ENCODE measurements at regions of chr3 and their contacts with region 1.

Region 1: GRCh38 chr3:185572183-185572582 is 13.9 kb upstream of the SENP2 start:
- DNase-seq: no peak
- ATAC-seq: no peak
- H3K4me3 ChIP-seq: no peak overlapping the region
- H3K27ac ChIP-seq: no peak overlapping the region
- H3K4me1 ChIP-seq: peaks cover 2 to 8% of the 10 kb centered on the region in 2 experiments; a peak in 1 of 4 replicates
- H3K27me3 ChIP-seq: no peaks in the 10 kb centered on the region
- CTCF ChIP-seq: no peak
- POLR2A ChIP-seq: no peak
- RAD21 ChIP-seq: no peak

Region 2: GRCh38 chr3:184777336-184778004 is 794.7 kb before region 1 on chr3:
- CTCF ChIA-PET with region 1: no interaction called
- POLR2A ChIA-PET with region 1: no interaction called
- RAD21 ChIA-PET with region 1: no interaction called
- intact Hi-C with region 1: no loop called
- DNase-seq: peak; percentile 91
- ATAC-seq: peak; percentile 97
- H3K4me3 ChIP-seq: no peak overlapping the region
- H3K27ac ChIP-seq: no peak overlapping the region
- H3K4me1 ChIP-seq: peaks cover 0 to 5% of the 10 kb centered on the region in 2 experiments; a peak in 1 of 4 replicates
- H3K27me3 ChIP-seq: 0 out of 2 replicates have a peak, but pooled peaks cover 6% of the 10 kb centered on the region
- CTCF ChIP-seq: peak; percentile 64 to 98 (median 83)
- POLR2A ChIP-seq: no peak
- RAD21 ChIP-seq: peak; percentile 99

Region 3: DNA sequence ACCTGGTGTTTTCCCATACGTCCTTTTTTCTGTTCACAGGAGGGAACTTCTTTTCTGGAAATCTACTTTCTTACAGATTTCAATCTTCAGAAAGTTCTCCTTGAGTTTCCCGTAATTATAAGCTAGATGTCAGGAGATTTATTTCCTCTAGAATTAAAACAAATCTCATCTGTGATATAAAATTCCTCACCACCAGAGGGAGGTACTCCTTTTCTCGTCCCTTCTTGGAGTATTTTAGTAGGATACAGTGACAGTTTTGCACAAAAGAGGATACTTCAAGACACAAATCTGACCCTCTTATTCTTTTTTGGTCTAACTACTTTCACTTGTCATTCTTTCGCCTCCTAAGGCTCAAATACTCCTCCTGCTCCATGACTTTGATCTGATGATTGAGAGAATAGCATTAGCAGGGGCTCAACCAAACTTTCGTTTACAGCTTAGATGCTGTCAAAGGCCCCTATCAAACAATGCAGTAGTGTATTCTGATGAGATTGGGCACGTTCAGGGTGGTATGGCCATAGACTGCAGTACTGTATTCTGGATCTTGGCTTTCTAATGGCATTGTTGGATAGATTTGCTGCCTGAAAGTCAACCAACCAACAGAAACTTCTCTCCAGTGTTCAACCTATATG is 111.3 kb before region 1 on chr3:
- CTCF ChIA-PET with region 1: interaction called, 30 read pairs
- POLR2A ChIA-PET with region 1: no interaction called
- RAD21 ChIA-PET with region 1: interaction called, 8 to 10 read pairs
- intact Hi-C with region 1: loop called (anchors 5 kb)
- DNase-seq: peak; percentile 32
- ATAC-seq: peak; percentile 75
- H3K4me3 ChIP-seq: no peak overlapping the region
- H3K27ac ChIP-seq: no peak overlapping the region
- H3K4me1 ChIP-seq: no peaks in the 10 kb centered on the region
- H3K27me3 ChIP-seq: no peaks in the 10 kb centered on the region
- CTCF ChIP-seq: peak; percentile 46 to 86 (median 66); a peak in 5 of 6 replicates
- POLR2A ChIP-seq: no peak
- RAD21 ChIP-seq: peak; percentile 83

Region 4: GRCh38 chr3:185519021-185519420 is 53.2 kb before region 1 on chr3:
- CTCF ChIA-PET with region 1: no interaction called
- POLR2A ChIA-PET with region 1: no interaction called
- RAD21 ChIA-PET with region 1: no interaction called
- intact Hi-C with region 1: no loop called
- DNase-seq: no peak
- ATAC-seq: peak; percentile 64
- H3K4me3 ChIP-seq: no peak overlapping the region
- H3K27ac ChIP-seq: no peak overlapping the region
- H3K4me1 ChIP-seq: no peaks in the 10 kb centered on the region
- H3K27me3 ChIP-seq: no peaks in the 10 kb centered on the region
- CTCF ChIP-seq: peak in 1 of 3 experiments; percentile 19; a peak in 1 of 6 replicates
- POLR2A ChIP-seq: no peak
- RAD21 ChIP-seq: peak; percentile 17; the same call in 1 of the 2 replicates

Region 5: GRCh38 chr3:185552358-185552877 is 19.8 kb before region 1 on chr3 and contains the start of gene LIPH:
- CTCF ChIA-PET with region 1: interaction called, 31 read pairs
- POLR2A ChIA-PET with region 1: interaction called, 6 read pairs
- RAD21 ChIA-PET with region 1: no interaction called
- intact Hi-C with region 1: no loop called
- DNase-seq: peak; percentile 76
- ATAC-seq: peak; percentile 84
- H3K4me3 ChIP-seq: peak within 1 kb of the TSS; percentile 44 to 57
- H3K27ac ChIP-seq: peak within 1 kb of the TSS; percentile 54
- H3K4me1 ChIP-seq: peaks cover 42 to 79% of the 10 kb centered on the region in 2 experiments
- H3K27me3 ChIP-seq: no peaks in the 10 kb centered on the region
- CTCF ChIP-seq: no peak
- POLR2A ChIP-seq: no peak
- RAD21 ChIP-seq: no peak; the same call in 1 of the 2 replicates
- total RNA-seq, gene LIPH: 13.7 TPM

Region 6: GRCh38 chr3:185585859-185586685 is 13.9 kb after region 1 on chr3 and contains the start of gene SENP2:
- CTCF ChIA-PET with region 1: interaction called, 21 read pairs
- POLR2A ChIA-PET with region 1: interaction called, 11 read pairs
- RAD21 ChIA-PET with region 1: interaction called in 1 of 2 experiments, 4 read pairs
- intact Hi-C with region 1: no loop called
- DNase-seq: peak; percentile 99
- ATAC-seq: peak; percentile 98
- H3K4me3 ChIP-seq: peak within 1 kb of the TSS; percentile 81 to 91
- H3K27ac ChIP-seq: peak within 1 kb of the TSS; percentile 44
- H3K4me1 ChIP-seq: peaks cover 4 to 20% of the 10 kb centered on the region in 2 experiments; a peak in 3 of 4 replicates
- H3K27me3 ChIP-seq: no peaks in the 10 kb centered on the region
- CTCF ChIP-seq: no peak
- POLR2A ChIP-seq: peak; percentile 62
- RAD21 ChIP-seq: no peak
- total RNA-seq, gene SENP2: 36.1 TPM

Measured in HCT116 (cell line).